ENCODE measurements at regions of chr14 and their contacts with region 1.

Region 1: DNA sequence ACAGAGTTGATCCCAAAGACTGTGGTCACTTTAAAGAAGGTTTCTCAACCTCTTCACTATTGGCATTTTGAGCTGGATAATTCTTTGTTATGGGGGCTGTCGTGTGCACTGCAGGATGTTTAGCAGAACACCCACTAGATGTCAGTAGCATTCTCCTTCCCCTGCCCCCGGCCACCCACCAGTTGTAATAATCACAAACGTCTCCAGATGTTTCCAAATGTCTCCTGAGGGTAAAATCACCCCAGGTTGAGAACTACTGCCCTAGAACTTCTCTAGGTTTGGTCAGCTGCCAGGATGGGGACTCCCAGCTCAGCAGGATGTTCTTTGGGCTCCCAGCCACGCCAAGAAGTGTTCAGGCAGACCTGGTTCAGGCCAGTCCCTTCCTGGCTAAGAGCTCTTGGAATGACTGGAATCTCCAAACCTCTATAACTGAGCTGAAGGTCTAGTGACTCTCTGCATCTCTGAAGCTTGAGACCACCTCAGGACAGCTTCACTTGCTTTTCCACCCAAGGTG is 12.5 kb upstream of the AJUBA start:
- DNase-seq: peak; percentile 59
- ATAC-seq: peak; percentile 78
- H3K4me3 Mint-ChIP-seq: no peak overlapping the region
- H3K27ac Mint-ChIP-seq: no peak overlapping the region
- H3K4me1 Mint-ChIP-seq: no peaks in the 10 kb centered on the region
- H3K27me3 Mint-ChIP-seq: no peaks in the 10 kb centered on the region

Region 2: GRCh38 chr14:22699801-22700564 is 294.8 kb before region 1 on chr14:
- CTCF ChIA-PET with region 1: no interaction called
- POLR2A ChIA-PET with region 1: no interaction called
- intact Hi-C with region 1: no loop called
- DNase-seq: no peak
- ATAC-seq: no peak
- H3K4me3 Mint-ChIP-seq: no peak overlapping the region
- H3K27ac Mint-ChIP-seq: no peak overlapping the region
- H3K4me1 Mint-ChIP-seq: no peaks in the 10 kb centered on the region
- H3K27me3 Mint-ChIP-seq: peaks cover 29% of the 10 kb centered on the region

Region 3: GRCh38 chr14:22973217-22974032 is 21.4 kb before region 1 on chr14:
- CTCF ChIA-PET with region 1: interaction called, 13 read pairs
- POLR2A ChIA-PET with region 1: no interaction called
- intact Hi-C with region 1: no loop called
- DNase-seq: peak; percentile 56
- ATAC-seq: peak; percentile 71
- H3K4me3 Mint-ChIP-seq: no peak overlapping the region
- H3K27ac Mint-ChIP-seq: no peak overlapping the region
- H3K4me1 Mint-ChIP-seq: no peaks in the 10 kb centered on the region
- H3K27me3 Mint-ChIP-seq: no peaks in the 10 kb centered on the region

Region 4: DNA sequence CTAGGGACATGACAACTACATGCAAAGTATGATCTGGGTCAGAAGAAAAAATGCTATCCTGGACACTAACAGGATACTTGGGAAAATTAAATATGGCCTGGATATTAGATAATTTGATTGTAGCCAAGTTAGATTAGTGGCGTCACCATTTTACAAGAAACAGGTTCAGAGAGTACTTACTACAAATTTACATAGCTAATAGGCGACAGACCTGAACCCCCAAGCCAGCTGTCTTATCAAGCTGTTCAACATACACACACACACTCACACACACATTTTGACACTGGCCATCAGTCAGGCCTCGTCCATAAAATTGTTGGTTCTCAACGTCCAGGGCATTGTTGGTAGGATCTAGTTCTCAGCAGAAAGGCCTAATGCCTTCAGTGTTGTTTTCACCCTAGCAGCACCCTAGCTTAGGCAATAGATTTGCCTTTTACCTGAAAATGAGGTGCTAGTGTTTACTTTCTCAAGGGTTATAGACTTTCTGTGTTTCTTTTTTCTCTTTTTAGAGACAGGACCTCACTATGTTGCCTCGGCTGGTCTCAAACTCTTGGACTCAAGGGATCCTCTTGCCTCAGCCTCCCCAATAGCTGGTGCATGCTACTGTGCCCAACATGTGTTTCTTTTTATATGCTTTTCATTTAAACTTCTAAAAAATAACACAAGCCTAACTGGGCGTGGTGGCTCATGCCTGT is 18.4 kb after region 1 on chr14:
- CTCF ChIA-PET with region 1: interaction called, 50 read pairs
- POLR2A ChIA-PET with region 1: no interaction called
- intact Hi-C with region 1: no loop called
- DNase-seq: no peak
- ATAC-seq: no peak
- H3K4me3 Mint-ChIP-seq: no peak overlapping the region
- H3K27ac Mint-ChIP-seq: no peak overlapping the region
- H3K4me1 Mint-ChIP-seq: peaks cover 24% of the 10 kb centered on the region
- H3K27me3 Mint-ChIP-seq: no peaks in the 10 kb centered on the region

Region 5: DNA sequence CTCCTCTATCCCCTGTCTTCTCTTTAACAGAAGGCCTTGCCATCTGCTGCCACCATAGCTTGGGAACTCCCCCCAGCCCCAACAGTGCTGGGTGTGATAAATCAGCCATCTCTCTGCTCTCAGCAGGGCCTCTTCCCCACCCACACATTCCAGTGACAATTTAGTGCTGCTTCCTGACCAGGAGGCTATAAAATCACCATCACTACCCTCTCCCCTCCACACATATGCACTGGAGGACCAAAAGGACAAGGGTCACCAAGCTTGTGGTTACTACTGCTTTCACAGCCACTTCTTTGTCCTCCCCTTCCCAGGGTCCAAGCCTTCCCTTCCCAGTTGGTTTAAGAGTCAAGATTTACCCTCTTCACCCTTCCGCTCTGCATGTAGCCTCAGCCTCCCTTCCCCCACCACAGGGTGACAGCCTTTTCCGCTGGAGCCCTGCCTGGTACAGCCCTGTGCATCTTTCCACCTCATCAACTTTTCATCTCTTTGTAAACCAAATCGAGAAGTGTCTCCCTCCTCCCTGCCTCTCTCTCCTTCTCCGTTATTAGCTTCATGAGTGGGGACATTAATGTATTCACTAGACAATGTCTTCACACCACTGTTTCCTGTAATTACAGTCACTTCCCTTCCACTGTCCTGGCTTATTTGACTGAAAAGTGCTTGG is 30.5 kb after region 1 on chr14:
- CTCF ChIA-PET with region 1: interaction called, 15 read pairs
- POLR2A ChIA-PET with region 1: no interaction called
- intact Hi-C with region 1: no loop called
- DNase-seq: peak; percentile 70
- ATAC-seq: peak; percentile 58
- H3K4me3 Mint-ChIP-seq: peak overlapping the region; percentile 37
- H3K27ac Mint-ChIP-seq: peak overlapping the region; percentile 90
- H3K4me1 Mint-ChIP-seq: peaks cover 72% of the 10 kb centered on the region
- H3K27me3 Mint-ChIP-seq: no peaks in the 10 kb centered on the region